Activated CD4-positive, alpha-beta memory T cell treated with anti-CD3 and anti-CD28 coated beads for 36 hours (primary cell): ENCODE measurements at regions of chr16 and their contacts with region 1.

Region 1: DNA sequence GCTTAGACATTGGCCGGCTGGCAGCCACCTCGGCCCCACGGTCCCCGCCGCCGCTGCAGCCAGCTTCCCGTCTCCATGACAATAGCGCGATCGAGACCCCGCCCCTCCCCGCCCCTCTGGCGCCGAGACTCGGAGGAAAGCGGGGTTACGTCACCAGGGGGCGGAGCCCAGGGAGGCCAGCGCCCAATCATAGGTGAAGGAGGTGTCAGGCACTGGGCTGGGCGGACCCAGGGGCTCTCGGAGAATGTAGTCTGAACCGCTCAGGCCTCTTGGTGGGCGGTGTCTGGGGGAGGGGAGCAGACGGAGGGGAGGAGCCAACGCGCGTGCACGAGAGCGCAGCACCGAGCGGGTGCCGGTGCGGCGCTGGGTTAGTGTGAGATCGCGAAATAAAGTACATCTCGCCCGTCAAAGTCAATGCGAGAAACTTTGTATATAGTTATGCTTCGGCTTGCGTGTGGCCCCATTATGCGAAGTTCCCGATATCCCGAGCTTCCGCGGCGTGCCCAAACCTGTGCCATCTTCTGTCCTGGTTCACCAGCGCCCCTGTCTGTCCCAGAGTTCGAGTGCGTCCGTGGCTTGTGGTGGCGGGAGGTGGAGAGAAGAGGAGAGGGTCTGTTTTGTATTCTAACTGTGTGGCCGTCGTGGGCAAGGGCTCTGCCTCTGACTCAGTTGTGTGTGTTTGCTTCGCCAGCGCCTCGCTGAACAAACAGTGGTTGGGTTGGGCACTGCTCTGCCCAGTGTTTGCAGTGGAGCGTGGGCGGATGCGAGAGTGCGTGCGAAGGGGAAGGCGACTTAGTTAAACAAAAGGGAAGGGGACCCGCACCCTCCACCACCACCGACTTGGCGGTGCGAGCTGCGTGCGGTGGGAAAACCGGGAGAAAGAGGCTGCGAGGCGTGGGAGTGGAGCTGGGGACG is 1.3 kb upstream of the IRX5 start:
- DNase-seq: peak; percentile 97
- H3K4me3 Mint-ChIP-seq: peak overlapping the region; percentile 79
- H3K27ac Mint-ChIP-seq: peak overlapping the region; percentile 31
- H3K4me1 Mint-ChIP-seq: peaks cover 25% of the 10 kb centered on the region
- H3K27me3 Mint-ChIP-seq: peaks cover 61% of the 10 kb centered on the region

Region 2: GRCh38 chr16:53457670-53458069 is 1471.7 kb before region 1 on chr16:
- CTCF ChIA-PET with region 1: no interaction called
- POLR2A ChIA-PET with region 1: no interaction called
- intact Hi-C with region 1: loop called (anchors 10 kb)
- DNase-seq: peak; percentile 81
- H3K4me3 Mint-ChIP-seq: peak overlapping the region; percentile 56
- H3K27ac Mint-ChIP-seq: peak overlapping the region; percentile 87
- H3K4me1 Mint-ChIP-seq: peaks cover 84% of the 10 kb centered on the region
- H3K27me3 Mint-ChIP-seq: no peaks in the 10 kb centered on the region

Region 3: GRCh38 chr16:53549970-53550690 is 1379.2 kb before region 1 on chr16:
- CTCF ChIA-PET with region 1: no interaction called
- POLR2A ChIA-PET with region 1: no interaction called
- intact Hi-C with region 1: loop called (anchors 5 kb)
- DNase-seq: peak; percentile 64
- H3K4me3 Mint-ChIP-seq: no peak overlapping the region
- H3K27ac Mint-ChIP-seq: no peak overlapping the region
- H3K4me1 Mint-ChIP-seq: peaks cover 19% of the 10 kb centered on the region
- H3K27me3 Mint-ChIP-seq: no peaks in the 10 kb centered on the region

Region 4: GRCh38 chr16:54286090-54286993 is 643.0 kb before region 1 on chr16 and contains the start of gene IRX3:
- CTCF ChIA-PET with region 1: interaction called, 3 read pairs
- POLR2A ChIA-PET with region 1: no interaction called
- intact Hi-C with region 1: loop called (anchors 2 kb)
- DNase-seq: no peak
- H3K4me3 Mint-ChIP-seq: peak within 1 kb of the TSS; percentile 59
- H3K27ac Mint-ChIP-seq: no peak within 1 kb of the TSS
- H3K4me1 Mint-ChIP-seq: peaks cover 31% of the 10 kb centered on the region
- H3K27me3 Mint-ChIP-seq: peaks cover 64% of the 10 kb centered on the region
- total RNA-seq, gene IRX3: 0.27 TPM in 1 of 2 experiments, not detected in the other

Region 5: GRCh38 chr16:54901606-54902005 is 27.7 kb before region 1 on chr16:
- CTCF ChIA-PET with region 1: no interaction called
- POLR2A ChIA-PET with region 1: no interaction called
- intact Hi-C with region 1: no loop called
- DNase-seq: no peak
- H3K4me3 Mint-ChIP-seq: no peak overlapping the region
- H3K27ac Mint-ChIP-seq: no peak overlapping the region
- H3K4me1 Mint-ChIP-seq: no peaks in the 10 kb centered on the region
- H3K27me3 Mint-ChIP-seq: peaks cover 11% of the 10 kb centered on the region

Region 6: DNA sequence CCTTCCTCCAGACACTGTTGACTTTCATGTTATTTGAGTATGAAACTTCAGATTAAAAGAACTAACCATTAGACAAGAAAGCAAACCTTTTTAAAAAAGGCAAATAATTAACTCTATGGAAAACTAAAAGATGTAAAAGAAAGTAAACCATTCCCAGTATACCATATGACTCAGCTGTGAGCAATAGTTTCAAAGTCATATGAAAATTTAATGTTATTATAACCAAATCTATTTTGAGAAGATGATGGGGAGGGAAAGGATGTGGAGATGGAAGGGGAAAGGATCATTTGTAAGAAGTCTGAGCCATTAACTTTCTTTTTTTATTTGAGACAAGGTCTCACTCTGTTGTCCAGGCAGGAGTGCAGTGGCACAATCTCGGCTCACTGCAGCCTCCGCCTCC is 133.1 kb after region 1 on chr16:
- CTCF ChIA-PET with region 1: no interaction called
- POLR2A ChIA-PET with region 1: no interaction called
- intact Hi-C with region 1: no loop called
- DNase-seq: no peak
- H3K4me3 Mint-ChIP-seq: no peak overlapping the region
- H3K27ac Mint-ChIP-seq: no peak overlapping the region
- H3K4me1 Mint-ChIP-seq: no peaks in the 10 kb centered on the region
- H3K27me3 Mint-ChIP-seq: peaks cover 31% of the 10 kb centered on the region

Region 7: DNA sequence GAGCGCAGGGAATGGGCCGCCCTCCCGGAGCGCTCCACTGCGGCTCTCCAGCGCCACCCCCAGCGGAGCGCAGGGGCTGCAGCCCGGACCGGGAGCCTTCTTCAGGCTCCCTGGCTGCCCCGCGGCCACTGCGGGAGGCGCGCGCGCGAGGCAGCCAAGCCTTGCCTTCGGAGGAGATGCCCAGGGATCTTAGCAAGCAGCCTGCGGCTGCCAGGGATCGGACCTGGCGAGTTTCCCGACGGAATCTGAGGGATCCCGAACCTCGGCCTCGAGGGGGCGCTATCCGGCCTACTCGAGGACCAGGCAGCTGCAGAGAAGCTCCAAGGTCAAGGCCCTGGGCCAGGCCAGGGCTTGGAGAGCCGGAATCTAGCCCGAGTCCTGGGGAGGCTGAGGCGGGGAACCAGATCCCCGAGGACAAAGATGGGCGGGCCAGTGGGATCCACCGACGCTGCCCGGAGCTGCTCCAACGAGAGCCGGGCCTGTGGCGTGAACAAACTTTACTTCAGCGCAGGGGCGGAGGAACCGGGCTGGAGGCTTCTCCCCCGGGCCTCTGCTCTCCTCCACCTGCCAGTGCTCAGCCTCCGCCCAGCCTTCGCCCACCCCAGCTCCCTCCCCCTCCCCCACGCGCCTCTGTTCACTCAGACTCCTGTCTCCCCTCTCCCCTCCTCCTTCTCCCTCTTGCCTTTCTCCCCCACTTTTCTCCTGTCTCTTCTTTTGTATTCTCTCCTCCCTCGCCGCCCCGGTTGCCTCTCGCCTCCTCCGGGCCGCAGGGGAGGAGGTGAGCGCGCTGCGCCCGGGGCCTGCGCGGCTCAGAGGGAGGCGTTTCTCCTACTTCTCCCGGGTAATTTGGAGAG is 394.5 kb after region 1 on chr16 and contains the start of gene IRX6:
- CTCF ChIA-PET with region 1: no interaction called
- POLR2A ChIA-PET with region 1: no interaction called
- intact Hi-C with region 1: loop called (anchors 10 kb)
- DNase-seq: no peak
- H3K4me3 Mint-ChIP-seq: no peak within 1 kb of the TSS
- H3K27ac Mint-ChIP-seq: no peak within 1 kb of the TSS
- H3K4me1 Mint-ChIP-seq: no peaks in the 10 kb centered on the region
- H3K27me3 Mint-ChIP-seq: peaks cover 32% of the 10 kb centered on the region
- total RNA-seq, gene IRX6: not detected